ENCODE measurements at regions of chr7 and their contacts with region 1.

Region 1: DNA sequence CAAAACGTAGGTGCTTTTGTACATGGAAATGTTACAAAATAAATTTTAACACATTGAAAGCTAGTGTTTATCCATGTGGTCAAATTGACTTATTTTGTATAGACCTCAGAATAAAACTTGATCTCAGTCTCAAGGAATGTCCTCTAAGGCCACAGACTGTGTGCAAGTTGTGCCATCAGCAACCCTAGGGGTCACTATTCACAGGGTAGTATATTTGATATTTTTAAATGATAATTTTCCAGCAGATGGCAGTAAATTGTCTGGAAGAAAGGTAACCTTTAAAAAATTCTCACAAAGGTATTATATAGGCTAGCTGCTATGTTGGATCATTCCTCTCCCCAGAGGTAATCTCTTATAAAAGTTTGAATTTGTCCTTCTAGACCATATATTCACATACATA is 12.9 kb upstream of the SNX10 start:
- DNase-seq: no peak
- ATAC-seq: no peak

Region 2: GRCh38 chr7:26127411-26127810 is 151.4 kb before region 1 on chr7:
- intact Hi-C with region 1: no loop called
- DNase-seq: no peak
- ATAC-seq: no peak

Region 3: GRCh38 chr7:26216049-26216448 is 62.7 kb before region 1 on chr7:
- intact Hi-C with region 1: loop called in 1 of 2 experiments (anchors 10 kb)
- DNase-seq: no peak
- ATAC-seq: no peak

Region 4: GRCh38 chr7:26245150-26245549 is 33.6 kb before region 1 on chr7:
- intact Hi-C with region 1: no loop called
- DNase-seq: no peak
- ATAC-seq: no peak